Heart right ventricle (tissue), 16 donors: ENCODE measurements at regions of chr2 and their contacts with region 1.

Region 1: GRCh38 chr2:28392297-28393113 is at the start of gene FOSL2:
- DNase-seq: peak; percentile 94 to 98
- ATAC-seq: peak; percentile 70 to 85 (median 74)
- H3K4me3 ChIP-seq: peak within 1 kb of the TSS; percentile 56 to 99 (median 98)
- H3K27ac ChIP-seq: peak within 1 kb of the TSS; percentile 99 to 100 (median 100)
- H3K4me1 ChIP-seq: peaks cover 0 to 45% (median 28%) of the 10 kb centered on the region in 9 donors
- H3K27me3 ChIP-seq: no peaks in the 10 kb centered on the region
- CTCF ChIP-seq: peak in 1 of 9 donors; percentile 4
- total RNA-seq, gene FOSL2: 29.7 to 182 (median 60.3) TPM

Region 2: DNA sequence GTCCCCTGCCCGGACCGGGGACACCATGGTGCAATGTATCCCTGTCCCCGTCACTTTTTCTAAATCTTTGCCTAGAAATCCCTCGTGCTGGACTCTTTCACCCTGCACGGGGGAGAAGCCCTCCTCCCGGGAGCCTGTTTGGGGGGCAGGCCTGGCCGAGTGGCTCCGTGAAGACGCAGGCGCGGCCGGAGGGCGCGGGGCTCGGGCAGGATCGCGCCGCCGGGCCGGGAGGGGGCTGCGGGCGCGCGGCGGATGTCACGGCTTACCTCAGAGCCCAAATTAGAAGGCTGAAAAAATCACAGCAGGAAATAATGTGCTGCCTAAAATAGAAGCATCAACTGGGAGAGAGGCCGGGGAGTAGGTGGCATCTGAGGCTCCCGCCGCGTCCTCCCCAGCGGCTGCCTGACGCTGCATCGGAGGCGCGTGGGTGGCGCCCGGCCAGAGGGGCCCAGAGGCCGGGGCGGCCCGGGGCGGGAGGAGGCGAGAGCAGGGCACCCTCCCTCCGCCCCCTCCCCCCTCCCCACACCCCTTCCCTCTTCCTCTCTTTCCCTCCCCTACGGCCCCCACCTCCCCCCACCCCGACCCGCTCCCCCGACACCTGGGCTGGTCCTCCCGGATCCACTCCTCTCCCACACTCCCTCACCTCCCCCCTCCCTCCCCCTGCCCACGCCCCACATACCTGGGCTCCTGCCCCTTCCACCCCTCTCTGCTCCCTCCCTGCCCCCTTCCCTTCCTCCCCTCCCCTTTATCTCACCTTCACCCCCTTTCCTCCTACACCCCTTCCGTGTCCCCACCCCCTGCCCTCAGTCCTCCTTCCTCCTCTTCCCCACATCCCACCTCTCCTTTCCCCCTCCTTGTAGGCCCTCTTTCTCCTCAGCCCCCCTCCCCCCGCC is 676.9 kb before region 1 on chr2:
- intact Hi-C with region 1: loop called in 3 of 10 experiments (anchors 5 kb)
- DNase-seq: peak; percentile 75 to 82
- ATAC-seq: peak; percentile 88 to 91 (median 89)
- H3K4me3 ChIP-seq: peak overlapping the region; percentile 21 to 57 (median 50)
- H3K27ac ChIP-seq: peak overlapping the region; percentile 76 to 99 (median 93)
- H3K4me1 ChIP-seq: peaks cover 9 to 50% (median 27%) of the 10 kb centered on the region in 9 donors
- H3K27me3 ChIP-seq: peaks cover 0 to 28% (median 0%) of the 10 kb centered on the region in 7 donors
- CTCF ChIP-seq: no peak

Region 3: GRCh38 chr2:27771548-27772335 is 620.8 kb before region 1 on chr2 and contains the start of gene MRPL33:
- intact Hi-C with region 1: loop called in 5 of 10 experiments (anchors 5 to 10 kb)
- DNase-seq: peak; percentile 95
- ATAC-seq: peak; percentile 97 to 98 (median 98)
- H3K4me3 ChIP-seq: peak within 1 kb of the TSS; percentile 50 to 90 (median 73)
- H3K27ac ChIP-seq: peak within 1 kb of the TSS; percentile 62 to 96 (median 92)
- H3K4me1 ChIP-seq: peaks cover 5 to 51% (median 41%) of the 10 kb centered on the region in 9 donors
- H3K27me3 ChIP-seq: no peaks in the 10 kb centered on the region
- CTCF ChIP-seq: no peak
- total RNA-seq, gene MRPL33: 170 to 416 (median 253) TPM

Region 4: GRCh38 chr2:27954771-27955383 is 437.6 kb before region 1 on chr2:
- intact Hi-C with region 1: loop called in 6 of 10 experiments (anchors 2 to 10 kb)
- DNase-seq: peak in 1 of 2 donors; percentile 51
- ATAC-seq: peak; percentile 77 to 93 (median 80)
- H3K4me3 ChIP-seq: no peak overlapping the region
- H3K27ac ChIP-seq: peak overlapping the region; percentile 10 to 85 (median 66)
- H3K4me1 ChIP-seq: peaks cover 3 to 87% (median 51%) of the 10 kb centered on the region in 9 donors
- H3K27me3 ChIP-seq: no peaks in the 10 kb centered on the region
- CTCF ChIP-seq: peak in 7 of 9 donors; percentile 22 to 62 (median 46)

Region 5: GRCh38 chr2:28164280-28164801 is 228.2 kb before region 1 on chr2:
- intact Hi-C with region 1: loop called in 4 of 10 experiments (anchors 5 to 10 kb)
- DNase-seq: peak; percentile 30 to 42
- ATAC-seq: peak; percentile 89 to 96 (median 92)
- H3K4me3 ChIP-seq: no peak overlapping the region
- H3K27ac ChIP-seq: peak overlapping the region; percentile 46 to 84 (median 57)
- H3K4me1 ChIP-seq: peaks cover 10 to 53% (median 44%) of the 10 kb centered on the region in 9 donors
- H3K27me3 ChIP-seq: no peaks in the 10 kb centered on the region
- CTCF ChIP-seq: peak in 1 of 9 donors; percentile 14

Region 6: GRCh38 chr2:28333606-28334526 is 58.6 kb before region 1 on chr2:
- intact Hi-C with region 1: loop called in 2 of 10 experiments (anchors 2 kb)
- DNase-seq: peak; percentile 56 to 74
- ATAC-seq: peak; percentile 78 to 92 (median 86)
- H3K4me3 ChIP-seq: no peak overlapping the region
- H3K27ac ChIP-seq: peak overlapping the region; percentile 83 to 99 (median 92)
- H3K4me1 ChIP-seq: peaks cover 3 to 65% (median 39%) of the 10 kb centered on the region in 9 donors
- H3K27me3 ChIP-seq: no peaks in the 10 kb centered on the region
- CTCF ChIP-seq: no peak